PC-3 (cell line): ENCODE measurements at regions of chr12 and their contacts with region 1.

Region 1: GRCh38 chr12:66903782-66904396 is 225.0 kb upstream of the GRIP1 start:
- DNase-seq: peak; percentile 42
- ATAC-seq: peak; percentile 74
- H3K4me3 ChIP-seq: no peak overlapping the region
- H3K27ac ChIP-seq: no peak overlapping the region
- H3K4me1 ChIP-seq: no peaks in the 10 kb centered on the region
- H3K27me3 ChIP-seq: no peaks in the 10 kb centered on the region
- CTCF ChIP-seq: peak; percentile 48

Region 2: DNA sequence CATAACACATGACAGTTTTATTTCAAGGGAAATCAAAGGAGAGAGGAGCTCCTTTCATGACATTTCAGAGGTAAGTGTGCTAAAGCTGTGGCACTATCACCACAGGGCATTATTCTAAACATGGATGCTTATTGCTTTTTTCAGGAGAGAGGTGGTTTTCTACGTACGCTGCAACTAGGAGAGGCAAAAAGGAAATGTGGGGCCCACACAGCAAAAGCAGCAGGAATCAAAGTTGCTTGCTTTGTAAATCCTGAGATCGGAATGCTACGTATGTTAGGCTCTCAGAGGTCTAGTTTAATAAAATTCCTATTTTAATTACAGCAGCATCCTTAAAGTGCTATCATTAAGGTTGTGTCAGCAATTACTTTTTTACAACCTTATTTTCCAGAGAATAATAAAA is 170.1 kb before region 1 on chr12:
- CTCF ChIA-PET with region 1: no interaction called
- POLR2A ChIA-PET with region 1: no interaction called
- intact Hi-C with region 1: no loop called
- DNase-seq: no peak
- ATAC-seq: no peak
- H3K4me3 ChIP-seq: no peak overlapping the region
- H3K27ac ChIP-seq: no peak overlapping the region
- H3K4me1 ChIP-seq: no peaks in the 10 kb centered on the region
- H3K27me3 ChIP-seq: no peaks in the 10 kb centered on the region
- CTCF ChIP-seq: no peak

Region 3: DNA sequence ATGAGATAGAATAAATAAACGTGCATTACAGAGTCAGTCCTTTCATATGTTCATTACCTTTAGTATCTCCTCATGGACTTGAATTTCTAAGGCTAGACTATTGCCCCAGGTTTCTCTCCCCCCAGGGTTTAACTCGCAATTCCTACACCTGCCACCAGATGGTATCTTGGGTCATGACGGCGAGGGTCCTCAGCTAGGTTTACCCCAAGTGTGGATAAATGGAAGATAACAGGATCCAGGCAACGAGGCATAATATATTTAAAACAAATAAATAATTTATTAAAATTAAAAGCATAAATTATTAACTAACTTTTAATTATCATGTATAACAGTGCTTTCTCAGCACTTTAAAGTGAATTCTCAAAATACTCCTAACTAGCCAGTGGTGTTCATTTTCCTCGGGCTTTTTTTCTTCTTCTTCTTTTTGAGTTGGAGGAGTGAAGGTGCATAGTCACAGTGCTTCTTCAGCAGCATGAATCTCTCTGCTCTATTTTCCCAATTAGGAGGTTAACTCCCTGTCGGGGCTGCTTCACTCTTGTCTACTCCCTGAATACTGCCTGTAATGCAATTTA is 121.7 kb after region 1 on chr12:
- CTCF ChIA-PET with region 1: no interaction called
- POLR2A ChIA-PET with region 1: no interaction called
- intact Hi-C with region 1: loop called (anchors 1 kb)
- DNase-seq: peak; percentile 77
- ATAC-seq: peak; percentile 46; the same call in 1 of the 2 replicates
- H3K4me3 ChIP-seq: no peak overlapping the region
- H3K27ac ChIP-seq: no peak overlapping the region
- H3K4me1 ChIP-seq: no peaks in the 10 kb centered on the region
- H3K27me3 ChIP-seq: no peaks in the 10 kb centered on the region
- CTCF ChIP-seq: peak; percentile 73